Dorsolateral prefrontal cortex (tissue), 120 donors: ENCODE measurements at regions of chr19 and their contacts with region 1.

Region 1: GRCh38 chr19:12881172-12881808 is at the start of gene DNASE2:
- DNase-seq: peak; percentile 70 to 94 (median 90)
- H3K4me3 ChIP-seq: peak within 1 kb of the TSS; percentile 56 to 94 (median 81)
- H3K27ac ChIP-seq: peak within 1 kb of the TSS in 58 of 59 donors; percentile 3 to 94 (median 82)
- H3K27me3 ChIP-seq: peaks cover 0 to 30% (median 16%) of the 10 kb centered on the region in 45 donors
- CTCF ChIP-seq: peak in 5 of 56 donors; percentile 9 to 23 (median 11)
- total RNA-seq, gene DNASE2: 9.5 to 33.1 (median 19.2) TPM

Region 2: GRCh38 chr19:12757544-12758274 is 123.6 kb before region 1 on chr19:
- intact Hi-C with region 1: no loop called
- DNase-seq: peak in 7 of 10 donors; percentile 37 to 81 (median 58)
- H3K4me3 ChIP-seq: peak overlapping the region; percentile 15 to 59 (median 42)
- H3K27ac ChIP-seq: peak overlapping the region in 50 of 59 donors; percentile 5 to 74 (median 47)
- H3K27me3 ChIP-seq: peaks cover 0 to 7% (median 0%) of the 10 kb centered on the region in 45 donors
- CTCF ChIP-seq: peak; percentile 37 to 95 (median 84)

Region 3: DNA sequence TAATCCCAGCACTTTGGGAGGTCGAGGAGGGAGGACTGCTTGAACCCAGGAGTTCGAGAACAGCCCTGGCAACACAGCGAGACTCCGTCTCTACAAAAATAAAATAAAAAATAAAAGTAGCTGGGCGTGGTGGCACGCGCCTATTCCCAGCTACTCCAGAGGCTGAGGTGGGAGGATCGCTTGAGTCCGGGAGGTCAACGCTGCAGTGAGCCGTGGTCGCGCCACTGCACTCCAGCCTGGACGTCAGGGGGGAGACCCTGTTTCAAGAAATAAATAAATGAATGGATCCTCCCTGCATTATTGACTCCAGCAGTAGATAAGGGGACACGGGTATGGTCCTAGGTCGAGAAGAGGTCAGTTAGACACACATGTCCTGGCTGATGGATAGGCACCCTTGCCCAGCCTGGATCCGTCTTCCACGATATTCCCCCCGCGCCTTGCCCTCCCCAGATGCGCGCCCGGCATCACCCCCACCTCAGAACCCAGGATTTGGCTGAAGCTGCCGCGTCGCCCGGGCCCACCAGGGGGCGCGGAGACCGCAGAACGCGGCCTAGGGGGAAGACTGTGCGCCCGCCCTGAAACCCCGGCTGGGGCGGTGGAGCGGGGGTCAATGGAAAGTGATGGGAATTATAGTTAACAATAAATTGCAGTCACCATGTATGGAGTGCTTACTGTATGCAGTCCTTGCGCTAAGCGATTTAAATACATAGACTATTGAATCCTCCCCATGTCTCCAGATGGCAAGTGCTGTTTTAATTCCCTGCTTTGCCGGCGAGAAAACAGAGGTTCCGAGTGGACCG is 103.9 kb before region 1 on chr19:
- intact Hi-C with region 1: no loop called
- DNase-seq: peak in 9 of 10 donors; percentile 61 to 88 (median 78)
- H3K4me3 ChIP-seq: peak overlapping the region; percentile 54 to 84 (median 71)
- H3K27ac ChIP-seq: peak overlapping the region; percentile 55 to 99 (median 95)
- H3K27me3 ChIP-seq: no peaks in the 10 kb centered on the region
- CTCF ChIP-seq: peak; percentile 78 to 99 (median 96)

Region 4: DNA sequence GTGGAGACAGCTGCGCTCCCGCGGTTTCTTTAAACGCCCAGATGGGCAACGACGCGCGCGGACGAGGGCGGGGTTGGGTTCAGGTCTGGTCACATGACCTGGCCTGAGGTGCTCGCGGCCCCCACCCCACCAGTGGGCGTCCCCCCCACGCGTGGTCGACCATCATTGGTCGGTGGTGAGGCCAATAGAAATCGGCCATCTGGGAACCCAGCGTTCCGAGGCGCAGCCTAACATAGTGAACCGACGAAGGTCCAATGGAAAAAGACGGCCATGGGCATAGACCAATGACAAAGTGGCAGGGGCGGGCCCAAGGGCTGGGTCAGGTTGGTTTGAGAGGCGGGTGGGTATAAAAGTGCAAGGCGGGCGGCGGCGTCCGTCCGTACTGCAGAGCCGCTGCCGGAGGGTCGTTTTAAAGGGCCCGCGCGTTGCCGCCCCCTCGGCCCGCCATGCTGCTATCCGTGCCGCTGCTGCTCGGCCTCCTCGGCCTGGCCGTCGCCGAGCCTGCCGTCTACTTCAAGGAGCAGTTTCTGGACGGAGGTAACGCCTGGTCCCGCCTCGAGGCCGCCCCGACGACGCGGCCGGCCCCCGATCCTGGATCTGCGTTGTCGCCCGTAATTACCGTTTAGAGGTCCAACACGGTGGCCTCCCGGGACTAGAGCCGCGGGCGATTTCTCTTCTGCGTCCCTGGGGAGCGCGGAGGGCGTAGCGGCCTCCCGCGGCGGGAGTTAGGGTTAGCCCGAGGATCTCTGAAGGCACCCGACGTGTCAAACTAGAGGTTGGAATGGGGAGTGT is 57.1 kb after region 1 on chr19 and contains the start of gene CALR:
- intact Hi-C with region 1: loop called in 1 of 2 experiments (anchors 5 kb)
- DNase-seq: peak; percentile 99 to 100 (median 100)
- H3K4me3 ChIP-seq: peak within 1 kb of the TSS; percentile 50 to 100 (median 99)
- H3K27ac ChIP-seq: peak within 1 kb of the TSS in 58 of 59 donors; percentile 53 to 97 (median 87)
- H3K27me3 ChIP-seq: no peaks in the 10 kb centered on the region
- CTCF ChIP-seq: peak in 17 of 56 donors; percentile 4 to 48 (median 14)
- total RNA-seq, gene CALR: 148 to 544 (median 264) TPM

Region 5: GRCh38 chr19:12952488-12953137 is 71.3 kb after region 1 on chr19:
- intact Hi-C with region 1: loop called in 1 of 2 experiments (anchors 5 kb)
- DNase-seq: no peak
- H3K4me3 ChIP-seq: peak overlapping the region in 7 of 59 donors; percentile 2 to 27 (median 15)
- H3K27ac ChIP-seq: peak overlapping the region in 57 of 59 donors; percentile 35 to 98 (median 82)
- H3K27me3 ChIP-seq: no peaks in the 10 kb centered on the region
- CTCF ChIP-seq: no peak